OCI-LY7 (cell line): ENCODE measurements at regions of chr10 and their contacts with region 1.

Region 1: GRCh38 chr10:11472158-11472753 is 139.2 kb downstream of the USP6NL start:
- DNase-seq: peak; percentile 73
- H3K4me3 ChIP-seq: no peak overlapping the region
- H3K27ac ChIP-seq: no peak overlapping the region
- H3K4me1 ChIP-seq: peaks cover 14% of the 10 kb centered on the region
- CTCF ChIP-seq: peak; percentile 97

Region 2: GRCh38 chr10:9608602-9609001 is 1863.7 kb before region 1 on chr10:
- CTCF ChIA-PET with region 1: no interaction called
- POLR2A ChIA-PET with region 1: no interaction called
- intact Hi-C with region 1: loop called (anchors 10 kb)
- DNase-seq: peak; percentile 2
- H3K4me3 ChIP-seq: no peak overlapping the region
- H3K27ac ChIP-seq: no peak overlapping the region
- H3K4me1 ChIP-seq: no peaks in the 10 kb centered on the region
- CTCF ChIP-seq: peak; percentile 68

Region 3: GRCh38 chr10:11424456-11425297 is 47.6 kb before region 1 on chr10:
- CTCF ChIA-PET with region 1: no interaction called
- POLR2A ChIA-PET with region 1: no interaction called
- intact Hi-C with region 1: loop called (anchors 1 kb)
- DNase-seq: peak; percentile 73
- H3K4me3 ChIP-seq: no peak overlapping the region
- H3K27ac ChIP-seq: no peak overlapping the region
- H3K4me1 ChIP-seq: no peaks in the 10 kb centered on the region
- CTCF ChIP-seq: peak; percentile 99; the same call in 1 of the 2 replicates

Region 4: GRCh38 chr10:11434324-11434723 is 37.9 kb before region 1 on chr10:
- CTCF ChIA-PET with region 1: interaction called, 8 read pairs
- POLR2A ChIA-PET with region 1: no interaction called
- intact Hi-C with region 1: loop called (anchors 1 kb)
- DNase-seq: peak; percentile 59
- H3K4me3 ChIP-seq: no peak overlapping the region
- H3K27ac ChIP-seq: no peak overlapping the region
- H3K4me1 ChIP-seq: no peaks in the 10 kb centered on the region
- CTCF ChIP-seq: peak; percentile 87